Spleen (tissue), 13 donors: ENCODE measurements at regions of chr5 and their contacts with region 1.

Region 1: GRCh38 chr5:90409318-90410177 is at the start of gene CETN3:
- DNase-seq: peak; percentile 96
- H3K4me3 ChIP-seq: peak within 1 kb of the TSS; percentile 71 to 92 (median 80)
- H3K27ac ChIP-seq: peak within 1 kb of the TSS; percentile 84 to 98 (median 96)
- H3K4me1 ChIP-seq: peaks cover 5 to 52% (median 23%) of the 10 kb centered on the region in 6 donors
- H3K27me3 ChIP-seq: no peaks in the 10 kb centered on the region
- CTCF ChIP-seq: no peak
- POLR2A ChIP-seq: peak in 2 of 3 donors; percentile 83 to 94
- total RNA-seq, gene CETN3: 7.8 to 20.2 (median 16.2) TPM

Region 2: DNA sequence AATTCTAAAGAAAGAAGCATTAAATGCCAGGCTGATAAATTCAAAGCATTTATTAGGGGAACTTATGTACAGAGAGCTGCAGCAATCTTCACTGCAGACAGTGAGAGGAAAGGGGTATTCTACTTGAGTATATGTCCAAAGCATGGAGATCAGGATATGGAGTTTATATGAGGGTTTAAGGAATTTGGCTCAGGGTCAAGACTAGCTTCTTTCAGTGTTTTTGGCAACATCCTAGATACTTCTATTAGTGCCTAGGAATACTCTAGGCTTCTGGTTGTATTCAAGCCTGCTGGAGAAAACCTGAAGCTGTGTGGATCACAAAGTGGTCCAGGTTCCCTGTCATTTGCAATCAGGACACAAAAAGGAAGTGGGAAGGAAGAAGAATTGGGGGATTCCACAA is 194.6 kb before region 1 on chr5:
- intact Hi-C with region 1: no loop called
- DNase-seq: no peak
- H3K4me3 ChIP-seq: no peak overlapping the region
- H3K27ac ChIP-seq: no peak overlapping the region
- H3K4me1 ChIP-seq: no peaks in the 10 kb centered on the region
- H3K27me3 ChIP-seq: no peaks in the 10 kb centered on the region
- CTCF ChIP-seq: no peak
- POLR2A ChIP-seq: no peak

Region 3: DNA sequence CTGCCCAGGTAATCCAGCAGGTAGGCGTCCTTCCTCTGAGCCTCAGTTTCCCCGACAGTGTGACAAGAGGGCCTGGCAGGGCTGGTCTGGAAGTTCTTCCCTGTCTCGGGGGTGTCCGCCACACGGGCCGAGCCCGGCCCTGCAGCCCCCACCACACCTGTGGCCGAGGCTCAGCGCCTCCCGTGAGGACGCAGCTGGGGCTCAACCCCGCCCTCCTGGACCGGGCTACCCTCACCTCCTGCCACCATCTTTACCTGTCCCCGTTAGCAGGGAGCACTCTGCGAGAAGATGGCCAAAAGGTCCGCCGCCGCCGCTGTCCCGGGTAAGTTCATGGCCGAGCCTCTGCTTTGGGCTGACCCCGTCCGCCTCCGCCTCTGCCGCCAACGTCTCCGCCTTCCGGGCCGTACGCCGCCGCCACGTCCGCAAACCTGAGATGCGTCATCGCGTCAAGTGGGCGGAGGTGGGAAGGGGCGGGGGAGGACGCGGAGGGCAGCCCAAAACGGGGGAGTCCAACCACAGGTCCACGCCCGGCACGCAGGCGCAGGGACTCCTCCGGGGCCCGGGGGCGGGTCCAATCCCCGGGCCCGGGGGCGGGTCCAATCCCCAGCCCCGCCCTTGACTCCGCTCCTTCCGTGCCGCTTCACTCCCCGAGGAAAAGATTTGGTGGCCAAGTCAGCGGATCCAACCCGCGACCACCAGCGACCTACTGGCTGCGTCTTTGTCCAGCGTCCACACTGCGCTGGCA is 119.8 kb after region 1 on chr5 and contains the start of gene LYSMD3:
- intact Hi-C with region 1: loop called (anchors 10 kb)
- DNase-seq: peak; percentile 100
- H3K4me3 ChIP-seq: peak within 1 kb of the TSS; percentile 50 to 97 (median 84)
- H3K27ac ChIP-seq: peak within 1 kb of the TSS; percentile 66 to 97 (median 94)
- H3K4me1 ChIP-seq: peaks cover 6 to 56% (median 37%) of the 10 kb centered on the region in 6 donors
- H3K27me3 ChIP-seq: peaks cover 0 to 15% (median 4%) of the 10 kb centered on the region in 7 donors
- CTCF ChIP-seq: peak in 2 of 11 experiments; percentile 2 to 6
- POLR2A ChIP-seq: peak; percentile 27 to 74 (median 38)
- total RNA-seq, gene LYSMD3: 15.5 to 27.4 (median 21.3) TPM

Region 4: DNA sequence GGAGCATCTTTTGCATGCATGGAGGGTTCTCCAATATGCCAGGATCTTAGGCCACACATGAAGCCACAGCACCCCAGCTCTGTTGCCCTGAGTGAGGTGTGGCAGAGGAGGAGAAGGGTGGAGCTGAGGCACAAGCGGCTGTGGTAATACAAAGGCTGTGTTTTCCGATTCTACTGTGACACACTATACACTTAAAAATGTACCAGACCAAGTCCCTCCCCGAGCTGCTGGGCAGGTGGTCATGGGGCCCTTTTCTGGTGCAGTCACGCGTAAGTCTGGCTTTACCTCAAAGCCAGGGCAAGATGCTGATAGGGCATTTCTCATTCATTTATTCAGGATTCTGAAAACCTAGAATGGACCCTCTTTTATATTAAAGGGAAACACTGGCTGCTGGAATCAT is 152.8 kb after region 1 on chr5:
- intact Hi-C with region 1: no loop called
- DNase-seq: no peak
- H3K4me3 ChIP-seq: no peak overlapping the region
- H3K27ac ChIP-seq: no peak overlapping the region
- H3K4me1 ChIP-seq: peaks cover 9 to 20% (median 14%) of the 10 kb centered on the region in 6 donors
- H3K27me3 ChIP-seq: peaks cover 0 to 59% (median 43%) of the 10 kb centered on the region in 7 donors
- CTCF ChIP-seq: no peak
- POLR2A ChIP-seq: no peak

Region 5: DNA sequence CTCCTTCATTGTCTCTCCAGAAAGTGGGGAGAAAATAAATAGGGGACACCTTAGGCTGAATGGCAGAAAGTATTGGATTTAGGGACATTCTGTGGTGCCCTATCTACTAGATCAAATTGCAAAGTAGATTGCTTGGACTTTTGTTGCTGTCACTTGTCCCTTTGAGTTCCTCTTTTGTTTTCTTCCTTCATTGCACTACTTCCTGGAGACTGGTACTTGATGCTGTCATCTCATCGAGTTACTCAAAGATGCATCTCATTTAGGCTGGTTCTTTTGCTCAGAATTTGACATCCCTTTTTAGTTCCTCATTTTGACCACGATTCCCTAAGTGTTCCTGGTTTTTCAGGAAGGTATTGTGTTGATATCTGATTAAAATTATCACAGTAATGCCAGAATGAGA is 286.6 kb after region 1 on chr5:
- intact Hi-C with region 1: no loop called
- DNase-seq: no peak
- H3K4me3 ChIP-seq: no peak overlapping the region
- H3K27ac ChIP-seq: no peak overlapping the region
- H3K4me1 ChIP-seq: peaks cover 0 to 3% (median 0%) of the 10 kb centered on the region in 6 donors
- H3K27me3 ChIP-seq: no peaks in the 10 kb centered on the region
- CTCF ChIP-seq: no peak
- POLR2A ChIP-seq: no peak